ENCODE measurements at regions of chr9 and their contacts with region 1.

Region 1: DNA sequence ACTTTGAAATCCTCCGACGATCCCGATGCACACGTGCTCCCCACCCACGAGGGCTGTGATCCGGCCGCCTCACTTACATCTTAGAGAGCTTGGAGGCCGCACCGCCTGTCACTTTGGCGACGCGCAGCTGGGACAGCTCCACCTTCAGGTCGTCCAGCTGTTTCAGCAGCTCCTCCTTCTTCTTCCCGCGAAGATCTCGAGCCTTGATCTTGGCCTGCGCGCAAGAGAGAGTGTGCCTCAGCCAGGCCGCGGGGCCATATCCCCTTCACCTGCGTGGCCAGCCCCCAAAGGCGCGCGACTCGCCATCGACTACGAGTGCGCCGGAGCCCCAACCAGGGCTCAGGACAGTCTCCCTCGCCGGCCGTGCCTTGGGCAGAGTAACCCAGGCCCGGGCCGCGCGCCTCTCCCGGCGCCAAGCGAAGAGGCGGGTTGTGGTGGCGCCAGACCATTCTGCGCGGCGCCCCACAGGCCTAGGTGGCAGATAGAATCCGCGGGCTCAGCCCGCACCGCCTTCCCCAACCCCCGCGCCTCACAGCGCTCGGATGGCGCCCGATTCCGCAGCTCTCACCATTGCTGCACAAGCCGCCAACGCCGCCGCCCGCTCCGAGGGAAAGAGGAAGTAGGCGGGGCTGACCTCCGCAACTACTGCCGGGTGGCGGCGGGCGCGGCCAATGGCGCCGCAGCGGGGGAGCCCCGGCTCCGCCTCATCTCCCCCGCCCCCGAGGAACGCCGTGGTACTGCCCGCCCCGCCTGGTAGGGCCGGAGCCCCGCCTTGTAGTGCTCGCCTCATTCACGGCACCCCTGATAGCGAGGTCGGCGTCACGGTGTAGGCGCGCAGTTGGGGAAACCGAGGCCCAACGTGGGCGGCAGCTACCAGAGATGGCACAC is at the starts of genes ARPC5L and RPL35:
- DNase-seq: peak; percentile 97
- ATAC-seq: peak; percentile 95
- H3K4me3 Mint-ChIP-seq: peak within 1 kb of the TSS; percentile 91
- H3K27ac Mint-ChIP-seq: peak within 1 kb of the TSS; percentile 98
- H3K4me1 Mint-ChIP-seq: peaks cover 23% of the 10 kb centered on the region
- H3K27me3 Mint-ChIP-seq: no peaks in the 10 kb centered on the region
- total RNA-seq, gene ARPC5L: 68.2 to 70.2 TPM
- total RNA-seq, gene RPL35: 1,398 to 1,411 TPM

Region 2: DNA sequence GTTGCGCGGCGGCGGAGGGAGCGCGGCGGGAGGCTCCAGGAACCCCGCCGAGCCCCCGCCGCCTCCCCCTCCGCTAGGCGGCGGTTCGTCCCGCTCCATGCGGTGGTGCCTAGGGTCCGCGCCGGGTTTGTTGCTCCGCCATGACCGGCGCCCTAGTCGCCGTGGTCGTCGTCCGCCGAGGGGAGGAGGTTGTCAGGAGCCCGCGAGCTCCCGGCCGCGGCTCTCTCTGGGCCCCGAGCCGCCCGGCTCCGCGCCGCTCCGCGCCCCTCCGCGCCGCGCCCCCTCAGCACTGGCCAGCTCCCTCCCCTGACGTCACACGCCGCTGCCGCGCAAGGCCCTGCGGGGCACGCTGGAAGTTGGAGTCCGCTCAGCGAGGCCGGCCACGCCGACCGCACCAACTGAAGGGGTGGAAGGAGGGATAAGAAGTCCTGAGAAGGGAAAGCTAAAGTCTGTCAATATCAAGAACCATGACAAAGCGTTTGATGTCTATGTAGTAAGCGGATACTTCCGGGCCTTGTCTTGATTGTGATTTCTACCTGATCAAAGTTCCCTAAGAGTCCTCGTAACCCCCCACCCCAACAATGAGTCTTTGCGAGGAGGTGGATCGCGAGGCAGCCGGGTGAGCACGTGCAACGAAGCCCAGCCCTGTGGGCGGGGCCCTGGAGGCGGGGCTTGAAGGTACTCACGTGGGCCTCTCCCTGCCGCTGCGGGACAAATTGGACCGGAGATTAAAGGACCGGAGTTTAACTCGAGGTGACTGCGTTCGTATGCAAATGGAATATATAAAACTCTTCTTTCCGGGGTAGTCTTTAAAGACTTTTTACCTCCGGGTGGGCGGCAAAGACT is 90.3 kb before region 1 on chr9 and contains the start of gene NR6A1:
- POLR2A ChIA-PET with region 1: interaction called, 14 read pairs
- DNase-seq: peak; percentile 95
- ATAC-seq: peak; percentile 94
- H3K4me3 Mint-ChIP-seq: peak within 1 kb of the TSS; percentile 91
- H3K27ac Mint-ChIP-seq: peak within 1 kb of the TSS; percentile 86
- H3K4me1 Mint-ChIP-seq: peaks cover 32% of the 10 kb centered on the region
- H3K27me3 Mint-ChIP-seq: peaks cover 76% of the 10 kb centered on the region
- total RNA-seq, gene NR6A1: 0.06 to 0.11 TPM

Region 3: GRCh38 chr9:124794902-124795491 is 66.6 kb before region 1 on chr9:
- POLR2A ChIA-PET with region 1: no interaction called
- DNase-seq: no peak
- ATAC-seq: no peak
- H3K4me3 Mint-ChIP-seq: no peak overlapping the region
- H3K27ac Mint-ChIP-seq: no peak overlapping the region
- H3K4me1 Mint-ChIP-seq: peaks cover 3% of the 10 kb centered on the region
- H3K27me3 Mint-ChIP-seq: peaks cover 23% of the 10 kb centered on the region

Region 4: DNA sequence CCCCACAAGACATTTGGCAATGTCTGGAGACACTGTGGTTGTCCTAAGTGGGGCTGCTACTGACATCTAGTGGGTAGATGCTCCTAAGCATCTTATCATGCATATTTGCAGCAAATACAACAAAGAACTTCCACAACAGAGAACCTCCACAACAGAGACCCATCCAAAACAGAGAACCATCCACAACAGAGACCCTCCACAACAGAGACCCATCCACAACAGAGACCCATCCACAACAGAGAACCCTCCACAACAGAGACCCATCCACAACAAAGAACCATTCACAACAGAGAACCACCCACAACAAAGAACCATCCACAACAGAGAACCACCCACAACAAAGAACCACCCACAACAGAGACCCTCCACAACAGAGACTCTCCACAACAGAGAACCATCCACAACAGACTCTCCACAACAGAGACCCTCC is 33.2 kb after region 1 on chr9:
- POLR2A ChIA-PET with region 1: interaction called, 14 read pairs
- DNase-seq: no peak
- ATAC-seq: peak; percentile 77
- H3K4me3 Mint-ChIP-seq: no peak overlapping the region
- H3K27ac Mint-ChIP-seq: peak overlapping the region; percentile 44
- H3K4me1 Mint-ChIP-seq: peaks cover 12% of the 10 kb centered on the region
- H3K27me3 Mint-ChIP-seq: no peaks in the 10 kb centered on the region

Region 5: DNA sequence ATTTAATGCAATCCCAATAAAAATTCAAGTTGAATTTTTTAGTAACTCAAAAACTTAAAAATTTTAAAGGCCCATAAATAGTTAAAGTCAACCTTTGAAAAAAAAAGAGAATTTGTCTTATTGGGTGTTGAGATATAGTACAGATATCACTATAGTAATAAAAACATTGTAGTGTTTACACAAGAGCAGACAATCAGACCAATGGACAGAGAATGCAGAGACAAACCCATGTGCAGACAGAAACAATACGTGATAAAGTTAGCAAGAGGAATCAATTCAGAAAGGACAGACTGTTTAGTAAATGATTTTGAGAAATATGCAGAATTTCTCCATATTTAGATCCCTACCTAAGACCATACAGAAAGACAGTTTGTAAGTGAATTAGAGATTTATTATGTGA is 45.4 kb after region 1 on chr9:
- POLR2A ChIA-PET with region 1: no interaction called
- DNase-seq: no peak
- ATAC-seq: no peak
- H3K4me3 Mint-ChIP-seq: no peak overlapping the region
- H3K27ac Mint-ChIP-seq: no peak overlapping the region
- H3K4me1 Mint-ChIP-seq: no peaks in the 10 kb centered on the region
- H3K27me3 Mint-ChIP-seq: no peaks in the 10 kb centered on the region